ENCODE measurements at regions of chr1 and their contacts with region 1.

Region 1: GRCh38 chr1:10530281-10530740 is 55.6 kb downstream of the PEX14 start:
- DNase-seq: peak; percentile 74
- H3K4me3 Mint-ChIP-seq: peak overlapping the region; percentile 44
- H3K27ac Mint-ChIP-seq: peak overlapping the region; percentile 37
- H3K4me1 Mint-ChIP-seq: peaks cover 32% of the 10 kb centered on the region
- H3K27me3 Mint-ChIP-seq: no peaks in the 10 kb centered on the region
- CTCF ChIP-seq: peak; percentile 89

Region 2: DNA sequence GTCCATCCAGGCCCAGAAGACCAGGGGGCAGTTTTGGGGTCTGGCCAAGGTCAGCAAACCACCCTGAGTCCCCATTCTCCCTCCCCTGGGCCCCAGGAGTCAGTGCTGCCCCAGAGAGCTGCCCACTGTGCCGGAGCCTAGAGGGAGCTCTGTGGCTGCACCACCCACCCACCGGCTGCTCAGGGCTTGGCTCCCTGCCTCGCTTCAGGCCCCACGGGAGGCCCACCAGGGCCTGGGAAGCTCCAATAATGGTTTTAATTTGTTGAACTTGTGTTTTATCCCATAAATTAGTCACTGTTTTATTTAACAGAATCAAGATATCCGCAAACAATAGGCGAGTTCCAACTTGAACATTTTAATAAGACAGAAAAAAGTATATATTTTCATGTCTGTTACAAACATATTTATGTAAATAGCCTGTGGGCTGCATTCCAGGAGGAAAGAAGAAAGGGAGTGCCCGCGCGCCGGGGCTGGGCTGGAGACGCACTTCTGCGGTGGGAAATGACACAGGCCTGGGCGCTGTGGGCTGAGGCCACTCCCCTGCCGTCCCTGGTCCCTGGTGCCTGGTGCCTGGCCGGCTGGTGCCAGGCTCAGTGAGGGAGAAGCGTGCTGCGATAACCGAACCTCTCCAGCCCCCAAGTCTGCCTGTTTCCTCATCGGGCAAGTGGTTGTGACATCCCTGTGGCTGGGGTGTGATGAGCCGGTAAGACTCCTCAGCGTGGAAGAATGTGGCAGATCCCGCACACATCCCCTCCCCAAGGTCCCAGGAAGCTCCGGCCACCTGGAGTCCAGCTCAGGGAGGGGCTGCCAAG is 105.0 kb after region 1 on chr1:
- CTCF ChIA-PET with region 1: interaction called, 3 read pairs
- POLR2A ChIA-PET with region 1: interaction called, 14 read pairs
- intact Hi-C with region 1: loop called (anchors 2 kb)
- DNase-seq: peak; percentile 93
- H3K4me3 Mint-ChIP-seq: peak overlapping the region; percentile 66
- H3K27ac Mint-ChIP-seq: peak overlapping the region; percentile 95
- H3K4me1 Mint-ChIP-seq: peaks cover 10% of the 10 kb centered on the region
- H3K27me3 Mint-ChIP-seq: no peaks in the 10 kb centered on the region
- CTCF ChIP-seq: no peak

Region 3: DNA sequence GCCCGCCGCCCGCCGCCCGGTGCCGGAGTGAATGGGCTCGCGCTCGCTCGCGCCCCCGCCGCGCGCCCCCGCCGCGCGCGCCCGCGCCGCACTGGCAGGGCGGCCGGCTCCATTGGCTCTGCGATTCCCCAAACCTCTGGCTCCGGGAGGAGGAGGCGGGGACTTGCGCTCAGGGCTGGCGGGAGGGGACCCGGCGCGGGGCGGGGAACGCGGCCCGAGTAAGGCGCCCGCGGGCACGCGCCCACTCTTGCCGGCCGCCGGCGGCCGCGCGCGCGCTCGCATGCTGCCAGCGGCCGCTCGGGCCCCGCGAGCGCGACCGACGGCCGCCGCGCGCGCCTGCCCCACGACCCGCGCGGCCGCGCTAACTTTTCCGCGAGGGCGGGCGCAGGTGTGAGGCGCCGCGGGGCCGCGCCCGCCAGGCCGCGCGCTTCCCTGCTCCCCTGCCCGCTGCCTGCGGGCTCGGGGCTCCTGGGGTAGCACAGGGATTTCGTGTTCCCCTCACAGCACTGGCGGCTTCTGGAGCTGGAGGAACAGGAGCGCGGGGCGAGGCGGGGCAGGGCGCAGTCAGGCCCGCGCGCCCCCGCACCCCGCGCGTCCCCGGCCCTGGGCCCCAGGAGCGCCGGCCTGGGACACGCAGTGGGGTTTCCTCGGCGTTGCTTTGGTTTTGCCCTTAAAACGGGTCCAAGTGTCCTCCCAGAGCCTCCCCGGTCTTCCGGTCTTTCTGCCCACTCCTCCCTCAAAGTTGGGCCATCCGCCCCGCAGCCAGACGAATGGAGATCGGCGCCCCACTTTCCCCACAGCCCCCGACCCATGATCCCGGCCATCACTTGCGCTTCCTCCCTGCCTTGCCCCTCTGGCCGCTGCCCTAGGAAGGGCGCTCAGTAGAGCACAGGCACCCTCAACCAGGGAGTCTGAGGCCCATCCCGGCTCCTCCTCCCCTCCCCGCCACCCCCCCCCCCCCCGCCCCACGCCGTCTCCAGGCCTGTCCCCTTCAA is 164.6 kb after region 1 on chr1:
- CTCF ChIA-PET with region 1: no interaction called
- POLR2A ChIA-PET with region 1: no interaction called
- intact Hi-C with region 1: loop called (anchors 5 kb)
- DNase-seq: peak; percentile 83
- H3K4me3 Mint-ChIP-seq: peak overlapping the region; percentile 71
- H3K27ac Mint-ChIP-seq: no peak overlapping the region
- H3K4me1 Mint-ChIP-seq: peaks cover 24% of the 10 kb centered on the region
- H3K27me3 Mint-ChIP-seq: no peaks in the 10 kb centered on the region
- CTCF ChIP-seq: no peak

Region 4: DNA sequence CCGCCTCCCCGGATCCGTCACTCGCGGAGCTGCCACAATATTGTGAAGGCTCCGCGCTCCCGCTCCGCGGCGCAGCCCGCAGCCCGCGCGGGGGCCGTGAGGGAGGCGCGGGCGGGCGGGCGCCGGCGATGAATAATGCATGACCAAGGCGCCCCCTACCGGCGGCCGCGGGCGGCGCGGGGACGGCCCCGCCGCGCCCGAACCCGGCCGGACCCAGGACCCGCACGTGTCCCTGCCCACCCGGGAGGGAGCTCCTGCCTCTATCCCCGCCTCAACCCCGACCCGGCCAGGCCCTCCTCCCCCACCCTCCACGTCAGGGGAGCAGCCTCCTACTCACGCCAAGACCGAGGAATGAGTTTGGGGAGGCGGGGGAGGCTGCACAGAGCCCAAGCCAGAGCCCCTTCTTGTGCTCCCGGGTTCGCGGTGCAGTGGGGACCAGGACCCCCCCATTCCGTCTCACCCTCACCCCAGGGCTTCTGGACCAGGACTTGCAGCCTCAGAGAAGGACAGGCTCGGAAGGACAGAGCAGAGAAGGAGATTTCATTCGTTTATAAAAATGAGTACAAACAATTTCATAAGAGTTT is 336.9 kb after region 1 on chr1:
- CTCF ChIA-PET with region 1: interaction called, 11 read pairs
- POLR2A ChIA-PET with region 1: interaction called, 3 read pairs
- intact Hi-C with region 1: loop called (anchors 1 kb)
- DNase-seq: peak; percentile 36
- H3K4me3 Mint-ChIP-seq: peak overlapping the region; percentile 55
- H3K27ac Mint-ChIP-seq: no peak overlapping the region
- H3K4me1 Mint-ChIP-seq: peaks cover 6% of the 10 kb centered on the region
- H3K27me3 Mint-ChIP-seq: no peaks in the 10 kb centered on the region
- CTCF ChIP-seq: peak; percentile 85

Region 5: DNA sequence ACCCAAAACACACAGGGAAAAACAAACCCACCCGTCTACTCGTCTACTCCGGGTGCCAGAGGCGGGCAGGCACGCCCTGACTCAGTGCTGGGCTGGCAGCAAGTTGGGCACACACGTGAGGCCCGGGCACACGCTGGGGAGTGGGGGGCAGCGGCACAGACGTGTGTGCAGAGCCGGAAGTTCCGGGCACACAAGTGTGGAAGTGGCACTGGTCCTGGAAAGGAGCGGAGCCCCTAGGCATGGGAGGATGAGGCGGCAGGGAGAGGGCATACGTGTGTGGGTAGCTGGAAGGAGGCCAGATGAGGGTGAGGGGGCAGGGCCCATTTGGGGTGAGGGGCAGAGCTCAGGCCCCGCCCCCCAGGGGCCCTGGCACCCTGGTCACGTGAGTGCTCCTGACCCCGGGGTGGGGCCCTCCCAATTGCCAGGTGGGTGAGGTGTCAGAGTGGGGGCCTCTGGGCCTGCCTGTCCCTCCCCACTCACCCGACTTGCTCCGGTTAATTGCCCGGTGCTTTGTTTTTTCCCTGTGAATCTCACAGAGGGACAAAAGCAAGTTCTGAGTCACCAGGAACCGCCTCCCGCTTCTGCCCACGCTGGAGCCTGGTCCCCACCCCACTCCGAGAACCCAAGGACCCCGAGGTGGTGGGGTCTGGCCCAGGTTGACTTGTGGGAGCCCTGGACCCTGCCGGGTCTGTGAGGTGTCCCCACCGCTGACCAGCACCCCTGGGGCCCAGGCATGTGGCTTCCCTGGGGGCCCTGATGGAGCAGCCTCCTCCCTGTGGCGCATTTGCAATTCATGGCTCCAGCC is 371.0 kb after region 1 on chr1:
- CTCF ChIA-PET with region 1: no interaction called
- POLR2A ChIA-PET with region 1: interaction called, 15 read pairs
- intact Hi-C with region 1: no loop called
- DNase-seq: peak; percentile 63
- H3K4me3 Mint-ChIP-seq: peak overlapping the region; percentile 72
- H3K27ac Mint-ChIP-seq: peak overlapping the region; percentile 93
- H3K4me1 Mint-ChIP-seq: peaks cover 43% of the 10 kb centered on the region
- H3K27me3 Mint-ChIP-seq: no peaks in the 10 kb centered on the region
- CTCF ChIP-seq: no peak

Region 6: DNA sequence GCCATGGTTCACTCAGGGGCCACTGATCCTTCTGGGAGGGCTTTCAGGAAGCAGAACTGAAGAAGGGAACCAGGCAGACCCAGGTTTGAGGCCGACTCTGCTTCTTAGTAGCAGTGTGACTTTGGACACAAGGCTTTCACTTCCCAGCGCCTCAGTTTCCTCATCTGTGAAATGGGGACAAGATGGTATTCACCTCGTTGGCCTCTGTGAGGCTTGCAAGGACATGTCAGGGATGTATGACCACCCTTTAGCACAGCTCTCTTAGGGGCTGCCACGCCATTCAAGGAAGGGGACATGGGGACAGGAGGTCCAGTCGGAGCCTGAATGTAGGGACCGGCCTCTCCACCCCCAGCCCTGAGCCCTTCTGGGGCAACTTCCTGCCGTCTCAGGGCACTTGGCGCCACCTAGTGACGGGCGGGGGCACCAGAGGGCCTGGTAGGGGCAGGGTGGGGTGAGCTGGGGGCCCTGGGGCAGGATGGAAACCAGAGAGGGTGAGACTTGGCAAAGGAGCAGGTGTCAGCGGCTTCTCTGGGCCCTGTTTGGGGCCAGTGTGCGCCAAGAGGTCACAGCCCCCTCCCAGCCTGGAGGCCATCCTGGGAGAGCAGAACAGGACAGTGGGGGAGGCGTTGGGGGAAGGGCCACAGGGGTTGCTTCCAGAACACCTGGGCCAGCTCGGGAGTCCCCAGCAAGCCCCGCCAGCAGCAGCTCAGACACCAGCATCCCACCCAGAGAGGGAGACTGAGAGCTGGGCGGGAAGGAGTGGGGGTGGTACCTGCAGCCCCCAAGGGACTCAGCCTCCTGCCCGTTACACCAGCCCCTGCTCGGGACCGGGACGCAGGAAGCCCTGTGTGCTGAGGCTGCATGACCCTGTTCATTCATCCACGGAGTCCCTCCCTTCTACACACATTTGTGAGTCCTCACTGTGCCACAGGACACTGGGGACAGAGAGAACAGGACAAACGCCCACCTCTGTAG is 379.7 kb after region 1 on chr1:
- CTCF ChIA-PET with region 1: interaction called, 3 read pairs
- POLR2A ChIA-PET with region 1: no interaction called
- intact Hi-C with region 1: loop called (anchors 1 kb)
- DNase-seq: peak; percentile 62
- H3K4me3 Mint-ChIP-seq: no peak overlapping the region
- H3K27ac Mint-ChIP-seq: no peak overlapping the region
- H3K4me1 Mint-ChIP-seq: peaks cover 7% of the 10 kb centered on the region
- H3K27me3 Mint-ChIP-seq: no peaks in the 10 kb centered on the region
- CTCF ChIP-seq: peak; percentile 80